ENCODE measurements at regions of chr13 and their contacts with region 1.

Region 1: GRCh38 chr13:49976314-49977258 is 20.3 kb upstream of the TRIM13 start:
- DNase-seq: no peak
- H3K4me3 ChIP-seq: no peak overlapping the region
- CTCF ChIP-seq: peak; percentile 83

Region 2: DNA sequence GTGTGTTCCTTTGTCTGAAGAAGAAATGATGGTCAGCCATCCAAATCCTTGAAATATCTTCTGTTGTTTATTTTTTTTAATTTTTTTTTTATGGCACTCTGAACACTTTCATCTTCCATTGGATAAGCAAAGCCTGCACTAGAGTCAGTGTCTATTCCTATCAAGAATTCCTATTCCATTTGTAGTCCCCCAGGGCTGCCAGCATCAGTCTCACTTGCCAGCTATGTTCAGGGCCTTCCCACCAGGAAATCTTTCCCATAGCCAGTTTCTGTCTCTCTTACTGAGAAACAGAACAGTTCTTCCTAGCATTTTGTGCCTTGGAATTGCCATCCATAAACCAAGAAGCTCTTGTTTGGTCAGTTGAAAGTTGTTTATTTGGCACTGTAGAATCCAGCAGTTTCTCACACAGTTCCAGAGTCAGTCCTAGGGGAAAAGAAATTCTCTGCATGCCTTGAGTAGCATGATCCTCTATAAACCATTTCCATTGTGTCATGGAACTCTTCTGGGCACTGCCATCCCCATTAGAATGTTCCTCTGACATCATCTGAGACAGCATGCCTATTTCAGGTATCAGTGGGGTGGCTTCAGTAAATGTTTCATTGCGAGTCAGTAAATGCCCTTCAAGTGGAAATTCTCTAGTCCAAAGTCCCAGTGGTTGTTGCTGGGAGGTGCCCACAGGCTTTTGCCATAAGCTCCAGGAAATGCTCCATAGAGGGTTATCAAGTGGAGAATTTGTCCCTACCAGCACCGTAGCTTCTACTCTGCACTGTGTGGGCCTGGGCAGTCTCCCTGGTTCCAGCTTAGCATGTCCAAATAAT is 21.7 kb before region 1 on chr13:
- CTCF ChIA-PET with region 1: interaction called, 10 read pairs
- POLR2A ChIA-PET with region 1: no interaction called
- DNase-seq: no peak
- H3K4me3 ChIP-seq: no peak overlapping the region
- CTCF ChIP-seq: no peak

Region 3: GRCh38 chr13:50801087-50801931 is 824.7 kb after region 1 on chr13:
- CTCF ChIA-PET with region 1: interaction called, 13 read pairs
- POLR2A ChIA-PET with region 1: no interaction called
- DNase-seq: peak; percentile 9
- H3K4me3 ChIP-seq: no peak overlapping the region
- CTCF ChIP-seq: peak; percentile 70

Region 4: GRCh38 chr13:50911937-50912795 is 935.6 kb after region 1 on chr13:
- CTCF ChIA-PET with region 1: interaction called, 51 read pairs
- POLR2A ChIA-PET with region 1: interaction called, 3 read pairs
- DNase-seq: peak; percentile 29
- H3K4me3 ChIP-seq: no peak overlapping the region
- CTCF ChIP-seq: peak; percentile 82

Region 5: GRCh38 chr13:51070005-51070649 is 1093.5 kb after region 1 on chr13:
- CTCF ChIA-PET with region 1: interaction called, 20 read pairs
- POLR2A ChIA-PET with region 1: interaction called, 3 read pairs
- DNase-seq: peak; percentile 12
- H3K4me3 ChIP-seq: no peak overlapping the region
- CTCF ChIP-seq: peak; percentile 90

Measured in AG04449 (cell line).